Caco-2 (cell line): ENCODE measurements at regions of chr13 and their contacts with region 1.

Region 1: GRCh38 chr13:103883164-103883563 is 816.9 kb upstream of the SLC10A2 start:
- DNase-seq: peak; percentile 78 to 83
- H3K4me3 ChIP-seq: no peak overlapping the region
- H3K4me3 Mint-ChIP-seq: peak overlapping the region; percentile 26
- H3K27ac Mint-ChIP-seq: no peak overlapping the region
- H3K4me1 ChIP-seq: peaks cover 8% of the 10 kb centered on the region; the same call in 1 of the 2 replicates
- H3K4me1 Mint-ChIP-seq: peaks cover 14% of the 10 kb centered on the region
- H3K27me3 ChIP-seq: no peaks in the 10 kb centered on the region
- H3K27me3 Mint-ChIP-seq: no peaks in the 10 kb centered on the region
- CTCF ChIP-seq: peak; percentile 31 to 53

Region 2: GRCh38 chr13:103983948-103984347 is 100.8 kb after region 1 on chr13:
- CTCF ChIA-PET with region 1: no interaction called
- POLR2A ChIA-PET with region 1: no interaction called
- intact Hi-C with region 1: no loop called
- DNase-seq: no peak
- H3K4me3 ChIP-seq: no peak overlapping the region
- H3K4me3 Mint-ChIP-seq: no peak overlapping the region
- H3K27ac Mint-ChIP-seq: no peak overlapping the region
- H3K4me1 ChIP-seq: no peaks in the 10 kb centered on the region
- H3K4me1 Mint-ChIP-seq: no peaks in the 10 kb centered on the region
- H3K27me3 ChIP-seq: no peaks in the 10 kb centered on the region
- H3K27me3 Mint-ChIP-seq: peaks cover 3% of the 10 kb centered on the region
- CTCF ChIP-seq: no peak

Region 3: DNA sequence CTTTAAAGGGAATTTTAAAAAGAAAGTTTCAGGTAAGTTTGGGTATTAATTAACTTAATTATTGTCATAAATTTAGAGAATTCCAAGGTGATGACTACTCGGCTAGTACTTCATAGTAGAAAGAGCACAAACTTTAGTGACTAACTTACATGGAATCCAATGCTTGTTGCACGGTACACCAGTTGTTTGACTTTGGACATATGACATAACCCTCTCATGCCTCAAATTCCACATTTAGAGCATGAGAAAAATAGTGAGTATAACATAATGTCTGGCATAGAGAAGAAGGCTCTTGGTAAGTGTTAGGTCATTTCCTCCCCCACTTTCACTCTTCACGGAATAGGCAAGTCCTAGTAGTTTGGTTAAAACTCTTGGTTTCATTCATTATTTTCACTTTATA is 432.4 kb after region 1 on chr13:
- CTCF ChIA-PET with region 1: no interaction called
- POLR2A ChIA-PET with region 1: no interaction called
- intact Hi-C with region 1: loop called (anchors 1 kb)
- DNase-seq: peak; percentile 15 to 38
- H3K4me3 ChIP-seq: no peak overlapping the region
- H3K4me3 Mint-ChIP-seq: no peak overlapping the region
- H3K27ac Mint-ChIP-seq: no peak overlapping the region
- H3K4me1 ChIP-seq: peaks cover 23% of the 10 kb centered on the region
- H3K4me1 Mint-ChIP-seq: peaks cover 17% of the 10 kb centered on the region
- H3K27me3 ChIP-seq: no peaks in the 10 kb centered on the region
- H3K27me3 Mint-ChIP-seq: no peaks in the 10 kb centered on the region
- CTCF ChIP-seq: no peak

Region 4: GRCh38 chr13:104460554-104460953 is 577.4 kb after region 1 on chr13:
- CTCF ChIA-PET with region 1: no interaction called
- POLR2A ChIA-PET with region 1: no interaction called
- intact Hi-C with region 1: loop called (anchors 10 kb)
- DNase-seq: no peak
- H3K4me3 ChIP-seq: no peak overlapping the region
- H3K4me3 Mint-ChIP-seq: no peak overlapping the region
- H3K27ac Mint-ChIP-seq: no peak overlapping the region
- H3K4me1 ChIP-seq: no peaks in the 10 kb centered on the region
- H3K4me1 Mint-ChIP-seq: no peaks in the 10 kb centered on the region
- H3K27me3 ChIP-seq: no peaks in the 10 kb centered on the region
- H3K27me3 Mint-ChIP-seq: no peaks in the 10 kb centered on the region
- CTCF ChIP-seq: no peak

Region 5: GRCh38 chr13:104571161-104571892 is 688.2 kb after region 1 on chr13:
- CTCF ChIA-PET with region 1: no interaction called
- POLR2A ChIA-PET with region 1: no interaction called
- intact Hi-C with region 1: loop called (anchors 2 kb)
- DNase-seq: peak; percentile 71 to 73
- H3K4me3 ChIP-seq: no peak overlapping the region
- H3K4me3 Mint-ChIP-seq: no peak overlapping the region
- H3K27ac Mint-ChIP-seq: no peak overlapping the region
- H3K4me1 ChIP-seq: no peaks in the 10 kb centered on the region
- H3K4me1 Mint-ChIP-seq: no peaks in the 10 kb centered on the region
- H3K27me3 ChIP-seq: 0 out of 2 replicates have a peak, but pooled peaks cover 1% of the 10 kb centered on the region
- H3K27me3 Mint-ChIP-seq: peaks cover 4% of the 10 kb centered on the region
- CTCF ChIP-seq: peak; percentile 68 to 73

Region 6: DNA sequence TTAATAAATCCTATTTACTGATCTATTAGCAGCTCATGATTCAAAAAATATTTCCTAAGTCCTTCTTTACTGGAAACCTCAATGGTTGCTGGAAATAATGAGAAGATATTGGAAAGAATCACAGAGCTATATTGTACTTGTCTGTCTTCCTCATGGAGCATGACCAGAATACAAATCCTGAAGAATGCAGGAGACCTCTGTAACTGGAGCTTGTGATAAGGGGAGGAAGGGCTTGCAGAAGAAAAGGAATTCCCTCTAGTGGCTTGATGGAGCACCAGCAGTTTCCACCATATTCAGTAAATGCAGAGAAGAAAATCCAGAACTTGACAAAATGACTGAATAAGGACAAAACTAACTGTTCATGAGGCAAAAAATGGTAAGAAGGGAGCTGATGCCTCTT is 1319.2 kb after region 1 on chr13:
- CTCF ChIA-PET with region 1: no interaction called
- POLR2A ChIA-PET with region 1: no interaction called
- intact Hi-C with region 1: loop called (anchors 10 kb)
- DNase-seq: peak in 1 of 2 experiments; percentile 14
- H3K4me3 ChIP-seq: no peak overlapping the region
- H3K4me3 Mint-ChIP-seq: no peak overlapping the region
- H3K27ac Mint-ChIP-seq: peak overlapping the region; percentile 20
- H3K4me1 ChIP-seq: no peaks in the 10 kb centered on the region
- H3K4me1 Mint-ChIP-seq: peaks cover 6% of the 10 kb centered on the region
- H3K27me3 ChIP-seq: no peaks in the 10 kb centered on the region
- H3K27me3 Mint-ChIP-seq: peaks cover 2% of the 10 kb centered on the region
- CTCF ChIP-seq: peak; percentile 38 to 59